T-cell (primary cell): ENCODE measurements at regions of chr6 and their contacts with region 1.

Region 1: DNA sequence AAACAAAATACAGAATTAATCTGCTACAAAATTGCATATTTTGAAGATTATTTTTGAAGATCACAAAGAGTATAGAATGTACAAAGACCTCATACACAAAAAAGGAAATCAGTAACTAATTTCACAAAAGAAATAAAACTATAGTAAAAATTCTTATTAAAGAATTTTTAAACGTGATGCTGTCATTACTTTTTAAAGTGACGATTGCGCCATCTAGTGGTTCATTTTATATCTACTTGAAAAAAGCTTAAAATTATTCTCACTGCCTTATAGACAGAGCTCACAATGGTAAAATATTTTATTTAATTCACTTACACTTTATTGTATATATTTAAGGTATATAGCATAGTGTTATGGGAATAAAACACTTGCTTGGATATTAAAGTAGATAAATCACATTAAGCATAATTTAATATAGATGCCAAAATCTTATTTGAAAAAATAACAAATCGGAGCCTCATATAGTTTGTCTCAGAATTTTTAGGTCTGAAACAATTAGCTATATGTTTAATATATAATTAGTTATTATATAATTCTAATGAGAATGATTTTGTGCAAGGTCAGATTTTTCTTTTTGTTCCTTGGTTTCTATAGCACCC is 128.8 kb downstream of the PHF3 start:
- DNase-seq: peak in 1 of 35 experiments; percentile 74
- ATAC-seq: no peak
- H3K4me3 ChIP-seq: no peak overlapping the region
- H3K4me3 Mint-ChIP-seq: no peak overlapping the region
- H3K27ac ChIP-seq: no peak overlapping the region
- H3K27ac Mint-ChIP-seq: no peak overlapping the region
- H3K4me1 ChIP-seq: no peaks in the 10 kb centered on the region
- H3K4me1 Mint-ChIP-seq: no peaks in the 10 kb centered on the region
- H3K27me3 ChIP-seq: no peaks in the 10 kb centered on the region
- H3K27me3 Mint-ChIP-seq: peaks cover 0 to 7% of the 10 kb centered on the region in 2 donors

Region 2: GRCh38 chr6:63573140-63573898 is 191.1 kb before region 1 on chr6:
- CTCF ChIA-PET with region 1: interaction called in 1 of 2 experiments, 11 read pairs
- POLR2A ChIA-PET with region 1: no interaction called
- DNase-seq: peak; percentile 28 to 78 (median 56)
- ATAC-seq: peak; percentile 13 to 55 (median 44)
- H3K4me3 ChIP-seq: peak overlapping the region; percentile 73 to 78
- H3K4me3 Mint-ChIP-seq: peak overlapping the region; percentile 90 to 93 (median 91)
- H3K27ac ChIP-seq: peak overlapping the region; percentile 97
- H3K27ac Mint-ChIP-seq: peak overlapping the region; percentile 96
- H3K4me1 ChIP-seq: peaks cover 9 to 13% of the 10 kb centered on the region in 2 experiments
- H3K4me1 Mint-ChIP-seq: peaks cover 29 to 44% (median 40%) of the 10 kb centered on the region in 3 donors
- H3K27me3 ChIP-seq: no peaks in the 10 kb centered on the region
- H3K27me3 Mint-ChIP-seq: no peaks in the 10 kb centered on the region